ENCODE measurements at regions of chr18 and their contacts with region 1.

Region 1: GRCh38 chr18:2589345-2590068 is 18.1 kb downstream of the NDC80 start:
- DNase-seq: peak in 2 of 5 donors; percentile 25 to 46
- H3K4me3 ChIP-seq: peak overlapping the region; percentile 64
- H3K4me3 Mint-ChIP-seq: peak overlapping the region; percentile 70 to 85 (median 80)
- H3K27ac ChIP-seq: no peak overlapping the region
- H3K27ac Mint-ChIP-seq: peak overlapping the region; percentile 68 to 97 (median 93)
- H3K4me1 ChIP-seq: peaks cover 43% of the 10 kb centered on the region
- H3K4me1 Mint-ChIP-seq: peaks cover 33 to 56% (median 55%) of the 10 kb centered on the region in 3 donors
- H3K27me3 ChIP-seq: no peaks in the 10 kb centered on the region
- H3K27me3 Mint-ChIP-seq: no peaks in the 10 kb centered on the region

Region 2: GRCh38 chr18:2571200-2572143 is 18.0 kb before region 1 on chr18 and contains the starts of genes METTL4 and NDC80:
- CTCF ChIA-PET with region 1: interaction called, 14 read pairs
- POLR2A ChIA-PET with region 1: no interaction called
- DNase-seq: peak; percentile 73 to 89 (median 79)
- H3K4me3 ChIP-seq: peak within 1 kb of the TSS; percentile 98
- H3K4me3 Mint-ChIP-seq: peak within 1 kb of the TSS; percentile 98 to 100 (median 99)
- H3K27ac ChIP-seq: peak within 1 kb of the TSS; percentile 100
- H3K27ac Mint-ChIP-seq: peak within 1 kb of the TSS; percentile 98 to 100 (median 100)
- H3K4me1 ChIP-seq: peaks cover 28% of the 10 kb centered on the region
- H3K4me1 Mint-ChIP-seq: peaks cover 54 to 80% (median 74%) of the 10 kb centered on the region in 3 donors
- H3K27me3 ChIP-seq: no peaks in the 10 kb centered on the region
- H3K27me3 Mint-ChIP-seq: peaks cover 0 to 2% of the 10 kb centered on the region in 2 donors
- total RNA-seq, gene METTL4: 21.4 to 22.8 TPM
- total RNA-seq, gene NDC80: 41.6 to 44.4 TPM

Region 3: DNA sequence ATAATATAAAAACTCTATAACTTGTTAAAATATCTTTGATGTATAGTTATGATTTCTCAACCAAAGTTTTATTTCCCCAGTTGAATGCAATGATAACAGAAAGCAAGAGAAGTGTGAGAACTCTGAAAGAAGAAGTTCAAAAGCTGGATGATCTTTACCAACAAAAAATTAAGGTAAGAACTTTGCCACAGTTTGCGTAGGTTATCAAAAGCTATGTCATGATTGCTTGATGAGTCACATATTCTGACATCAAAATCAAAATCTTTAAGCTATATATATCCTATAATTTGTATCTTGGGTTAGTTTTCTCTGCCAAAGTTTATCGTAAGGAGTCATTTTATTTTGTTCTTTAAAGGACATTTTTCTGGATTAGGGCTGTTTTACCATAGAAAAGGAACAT is 16.8 kb after region 1 on chr18:
- CTCF ChIA-PET with region 1: interaction called, 5 read pairs
- POLR2A ChIA-PET with region 1: interaction called, 10 read pairs
- DNase-seq: peak in 2 of 5 donors; percentile 44 to 46
- H3K4me3 ChIP-seq: no peak overlapping the region
- H3K4me3 Mint-ChIP-seq: peak overlapping the region; percentile 61 to 78 (median 71)
- H3K27ac ChIP-seq: peak overlapping the region; percentile 3
- H3K27ac Mint-ChIP-seq: peak overlapping the region; percentile 61 to 95 (median 92)
- H3K4me1 ChIP-seq: peaks cover 38% of the 10 kb centered on the region
- H3K4me1 Mint-ChIP-seq: peaks cover 49 to 72% (median 64%) of the 10 kb centered on the region in 3 donors
- H3K27me3 ChIP-seq: no peaks in the 10 kb centered on the region
- H3K27me3 Mint-ChIP-seq: no peaks in the 10 kb centered on the region

Region 4: GRCh38 chr18:2636126-2636631 is 46.7 kb after region 1 on chr18:
- CTCF ChIA-PET with region 1: interaction called, 4 read pairs
- POLR2A ChIA-PET with region 1: interaction called, 17 read pairs
- DNase-seq: no peak
- H3K4me3 ChIP-seq: peak overlapping the region; percentile 51
- H3K4me3 Mint-ChIP-seq: peak overlapping the region; percentile 81 to 88 (median 86)
- H3K27ac ChIP-seq: peak overlapping the region; percentile 82
- H3K27ac Mint-ChIP-seq: peak overlapping the region; percentile 97 to 99 (median 98)
- H3K4me1 ChIP-seq: peaks cover 68% of the 10 kb centered on the region
- H3K4me1 Mint-ChIP-seq: peaks cover 93 to 100% (median 95%) of the 10 kb centered on the region in 3 donors
- H3K27me3 ChIP-seq: no peaks in the 10 kb centered on the region
- H3K27me3 Mint-ChIP-seq: no peaks in the 10 kb centered on the region

Region 5: GRCh38 chr18:2714140-2714539 is 124.6 kb after region 1 on chr18:
- CTCF ChIA-PET with region 1: no interaction called
- POLR2A ChIA-PET with region 1: no interaction called
- DNase-seq: no peak
- H3K4me3 ChIP-seq: no peak overlapping the region
- H3K4me3 Mint-ChIP-seq: peak overlapping the region in 2 of 7 donors; percentile 2 to 51
- H3K27ac ChIP-seq: no peak overlapping the region
- H3K27ac Mint-ChIP-seq: peak overlapping the region in 7 of 8 donors; percentile 44 to 88 (median 82)
- H3K4me1 ChIP-seq: peaks cover 18% of the 10 kb centered on the region
- H3K4me1 Mint-ChIP-seq: peaks cover 49 to 76% (median 61%) of the 10 kb centered on the region in 3 donors
- H3K27me3 ChIP-seq: no peaks in the 10 kb centered on the region
- H3K27me3 Mint-ChIP-seq: peaks cover 0 to 1% of the 10 kb centered on the region in 2 donors